AG04449 (cell line): ENCODE measurements at regions of chr9 and their contacts with region 1.

Region 1: DNA sequence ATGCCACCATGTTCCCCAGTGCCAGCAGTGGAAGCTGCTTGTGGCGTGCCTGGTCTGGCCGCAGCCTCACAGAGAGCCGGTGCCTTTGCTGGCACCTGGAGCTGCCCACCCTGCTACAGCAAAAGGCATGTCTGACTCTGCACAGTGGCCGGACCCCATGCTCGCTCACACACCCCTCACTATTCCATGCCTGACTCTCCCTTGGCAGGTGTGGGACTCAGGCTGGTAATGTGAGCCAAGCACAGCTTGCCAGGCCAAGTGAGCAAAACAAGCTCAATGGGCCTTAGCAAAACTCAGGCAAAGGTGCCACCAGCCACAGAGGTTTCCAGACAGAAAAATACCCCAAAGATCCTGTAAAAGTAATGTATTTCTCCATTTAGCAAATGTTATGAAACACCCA is 15.5 kb downstream of the GNA14 start:
- DNase-seq: no peak
- H3K4me3 ChIP-seq: no peak overlapping the region
- CTCF ChIP-seq: no peak

Region 2: DNA sequence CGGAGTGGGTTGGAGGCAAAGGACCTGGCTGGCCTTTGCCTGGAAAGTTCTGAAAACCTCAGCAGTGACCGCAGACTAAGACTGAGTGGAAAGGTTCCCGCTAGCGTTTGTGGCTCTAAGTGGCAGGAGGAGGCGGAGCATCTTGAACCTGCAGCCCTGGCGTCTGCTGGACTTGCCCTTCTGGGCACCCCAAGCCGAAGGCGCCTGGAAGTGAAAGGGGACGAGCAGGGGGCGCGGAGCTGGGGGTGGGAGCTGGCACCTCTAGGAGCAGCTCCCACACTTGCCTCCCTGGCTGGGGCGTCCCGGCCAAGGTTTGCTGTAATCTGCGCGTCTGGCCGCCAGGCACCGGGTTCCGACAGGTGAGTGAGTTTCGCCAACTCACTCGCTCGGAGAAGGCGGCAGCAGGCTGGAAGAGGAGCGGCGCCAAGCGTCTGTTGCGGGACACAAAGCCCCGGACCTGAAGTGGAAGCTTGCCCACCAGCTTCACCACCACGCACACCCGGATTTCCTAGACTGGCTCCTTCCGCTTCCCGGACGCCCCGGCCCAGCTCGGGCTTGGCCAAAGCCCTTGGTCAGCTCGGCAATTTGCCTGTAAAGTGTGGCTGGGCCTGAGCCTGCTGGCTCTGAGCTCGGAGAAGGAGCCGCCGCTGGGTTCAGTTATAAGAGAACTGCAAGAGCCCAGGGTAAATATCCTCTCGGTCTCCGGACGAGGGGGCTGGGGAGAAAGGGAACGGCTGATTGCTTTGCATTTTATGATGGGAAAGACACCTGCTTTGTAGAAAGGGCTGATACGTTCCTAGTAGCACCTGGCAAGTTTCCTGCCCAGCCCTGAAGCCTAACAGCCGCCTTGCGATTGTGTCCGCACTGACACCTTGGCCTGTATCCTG is 15.8 kb after region 1 on chr9 and contains the start of gene GNA14:
- CTCF ChIA-PET with region 1: interaction called, 12 read pairs
- POLR2A ChIA-PET with region 1: no interaction called
- DNase-seq: no peak
- H3K4me3 ChIP-seq: peak within 1 kb of the TSS; percentile 40
- CTCF ChIP-seq: no peak